ENCODE measurements at regions of chr11 and their contacts with region 1.

Region 1: GRCh38 chr11:36131721-36132397 is 157.4 kb downstream of the COMMD9 start:
- DNase-seq: peak; percentile 31 to 35
- ATAC-seq: peak; percentile 69 to 75
- H3K4me3 ChIP-seq: no peak overlapping the region
- H3K27ac ChIP-seq: no peak overlapping the region
- H3K4me1 ChIP-seq: peaks cover 0 to 14% of the 10 kb centered on the region in 2 donors
- H3K27me3 ChIP-seq: no peaks in the 10 kb centered on the region
- CTCF ChIP-seq: peak; percentile 35 to 78 (median 61)
- POLR2A ChIP-seq: no peak

Region 2: GRCh38 chr11:36041988-36042611 is 89.8 kb before region 1 on chr11:
- in situ Hi-C with region 1: no loop called
- intact Hi-C with region 1: loop called (anchors 5 kb)
- DNase-seq: no peak
- ATAC-seq: no peak
- H3K4me3 ChIP-seq: no peak overlapping the region
- H3K27ac ChIP-seq: no peak overlapping the region
- H3K4me1 ChIP-seq: peaks cover 3 to 5% of the 10 kb centered on the region in 2 donors
- H3K27me3 ChIP-seq: no peaks in the 10 kb centered on the region
- CTCF ChIP-seq: peak in 2 of 5 experiments; percentile 21 to 43
- POLR2A ChIP-seq: no peak